ENCODE measurements at regions of chr3 and their contacts with region 1.

Region 1: GRCh38 chr3:193592944-193593667 is at the start of gene OPA1:
- DNase-seq: peak; percentile 96
- H3K4me3 Mint-ChIP-seq: peak within 1 kb of the TSS; percentile 93
- H3K27ac Mint-ChIP-seq: peak within 1 kb of the TSS; percentile 97
- H3K4me1 Mint-ChIP-seq: peaks cover 37% of the 10 kb centered on the region
- H3K27me3 Mint-ChIP-seq: no peaks in the 10 kb centered on the region
- total RNA-seq, gene OPA1: 92.6 to 92.7 TPM

Region 2: GRCh38 chr3:192651836-192652512 is 941.1 kb before region 1 on chr3:
- CTCF ChIA-PET with region 1: no interaction called
- POLR2A ChIA-PET with region 1: no interaction called
- intact Hi-C with region 1: no loop called
- DNase-seq: no peak
- H3K4me3 Mint-ChIP-seq: no peak overlapping the region
- H3K27ac Mint-ChIP-seq: no peak overlapping the region
- H3K4me1 Mint-ChIP-seq: no peaks in the 10 kb centered on the region
- H3K27me3 Mint-ChIP-seq: peaks cover 1% of the 10 kb centered on the region

Region 3: GRCh38 chr3:192899540-192899982 is 693.5 kb before region 1 on chr3:
- CTCF ChIA-PET with region 1: no interaction called
- POLR2A ChIA-PET with region 1: no interaction called
- intact Hi-C with region 1: loop called (anchors 5 kb)
- DNase-seq: peak; percentile 37
- H3K4me3 Mint-ChIP-seq: no peak overlapping the region
- H3K27ac Mint-ChIP-seq: peak overlapping the region; percentile 90
- H3K4me1 Mint-ChIP-seq: peaks cover 54% of the 10 kb centered on the region
- H3K27me3 Mint-ChIP-seq: peaks cover 8% of the 10 kb centered on the region

Region 4: GRCh38 chr3:193240436-193240849 is 352.7 kb before region 1 on chr3:
- CTCF ChIA-PET with region 1: no interaction called
- POLR2A ChIA-PET with region 1: no interaction called
- intact Hi-C with region 1: no loop called
- DNase-seq: no peak
- H3K4me3 Mint-ChIP-seq: peak overlapping the region; percentile 21
- H3K27ac Mint-ChIP-seq: no peak overlapping the region
- H3K4me1 Mint-ChIP-seq: no peaks in the 10 kb centered on the region
- H3K27me3 Mint-ChIP-seq: peaks cover 22% of the 10 kb centered on the region

Region 5: DNA sequence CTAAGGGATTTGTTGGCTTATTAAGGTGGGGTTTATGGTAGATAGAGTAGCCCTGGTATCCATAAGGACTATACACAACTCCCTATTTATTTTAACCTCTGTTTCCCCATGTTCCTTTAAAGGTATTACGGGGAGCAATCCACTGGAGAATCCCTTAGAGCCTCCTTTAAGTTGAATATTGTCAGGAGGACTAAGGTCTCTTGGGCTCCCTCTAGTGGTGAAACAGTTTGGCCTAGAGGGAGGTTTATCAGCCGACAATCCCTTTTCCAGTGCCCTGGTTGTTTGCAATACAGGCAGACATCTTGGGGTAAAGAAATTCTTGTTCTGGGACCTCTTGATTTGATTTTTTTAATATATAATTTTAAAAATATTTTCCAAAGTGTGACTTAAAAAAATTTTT is 12.8 kb after region 1 on chr3:
- CTCF ChIA-PET with region 1: interaction called, 4 read pairs
- POLR2A ChIA-PET with region 1: interaction called, 3 read pairs
- intact Hi-C with region 1: loop called (anchors 2 kb)
- DNase-seq: peak; percentile 45
- H3K4me3 Mint-ChIP-seq: no peak overlapping the region
- H3K27ac Mint-ChIP-seq: no peak overlapping the region
- H3K4me1 Mint-ChIP-seq: peaks cover 40% of the 10 kb centered on the region
- H3K27me3 Mint-ChIP-seq: no peaks in the 10 kb centered on the region

Region 6: GRCh38 chr3:193620650-193621049 is 27.5 kb after region 1 on chr3:
- CTCF ChIA-PET with region 1: no interaction called
- POLR2A ChIA-PET with region 1: interaction called, 3 read pairs
- intact Hi-C with region 1: loop called (anchors 1 kb)
- DNase-seq: no peak
- H3K4me3 Mint-ChIP-seq: no peak overlapping the region
- H3K27ac Mint-ChIP-seq: peak overlapping the region; percentile 65
- H3K4me1 Mint-ChIP-seq: peaks cover 17% of the 10 kb centered on the region
- H3K27me3 Mint-ChIP-seq: no peaks in the 10 kb centered on the region

Measured in activated CD4-positive, alpha-beta memory T cell treated with anti-CD3 and anti-CD28 coated beads for 36 hours (primary cell).